Activated naive CD4-positive, alpha-beta T cell treated with anti-CD3 and anti-CD28 coated beads for 36 hours (primary cell): ENCODE measurements at regions of chr2 and their contacts with region 1.

Region 1: DNA sequence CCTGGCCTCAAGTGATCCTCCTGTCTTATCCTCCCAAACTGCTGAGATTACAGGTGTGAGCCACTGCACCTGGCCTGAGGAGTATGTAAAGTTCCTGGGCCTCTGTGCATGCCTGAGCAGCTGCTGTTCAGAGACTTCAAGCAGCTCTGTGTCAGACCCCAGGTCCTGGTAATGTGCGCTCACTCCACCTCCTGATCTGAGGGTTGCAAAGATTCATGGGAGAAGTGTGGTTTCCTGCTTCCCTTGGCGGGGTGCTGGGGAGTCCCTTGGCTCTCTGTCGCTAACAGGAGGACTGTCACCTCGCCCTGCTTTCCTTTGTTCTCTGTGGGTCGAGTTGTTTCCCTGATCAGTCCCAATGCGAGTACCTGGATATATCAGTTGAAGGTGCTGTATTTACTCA is 8.6 kb upstream of the IL36A start:
- DNase-seq: peak; percentile 93
- H3K4me3 Mint-ChIP-seq: no peak overlapping the region
- H3K27ac Mint-ChIP-seq: peak overlapping the region; percentile 80
- H3K4me1 Mint-ChIP-seq: peaks cover 34% of the 10 kb centered on the region
- H3K27me3 Mint-ChIP-seq: no peaks in the 10 kb centered on the region

Region 2: GRCh38 chr2:112764071-112765044 is 232.3 kb before region 1 on chr2 and contains the start of gene CKAP2L:
- CTCF ChIA-PET with region 1: no interaction called
- intact Hi-C with region 1: loop called (anchors 1 kb)
- DNase-seq: peak; percentile 99
- H3K4me3 Mint-ChIP-seq: peak within 1 kb of the TSS; percentile 98
- H3K27ac Mint-ChIP-seq: peak within 1 kb of the TSS; percentile 93
- H3K4me1 Mint-ChIP-seq: peaks cover 18% of the 10 kb centered on the region
- H3K27me3 Mint-ChIP-seq: no peaks in the 10 kb centered on the region
- total RNA-seq, gene CKAP2L: 49.2 to 50.8 TPM

Region 3: GRCh38 chr2:112980537-112980936 is 16.1 kb before region 1 on chr2:
- CTCF ChIA-PET with region 1: interaction called, 3 read pairs
- intact Hi-C with region 1: loop called (anchors 1 kb)
- DNase-seq: peak; percentile 48
- H3K4me3 Mint-ChIP-seq: no peak overlapping the region
- H3K27ac Mint-ChIP-seq: peak overlapping the region; percentile 67
- H3K4me1 Mint-ChIP-seq: peaks cover 43% of the 10 kb centered on the region
- H3K27me3 Mint-ChIP-seq: no peaks in the 10 kb centered on the region

Region 4: DNA sequence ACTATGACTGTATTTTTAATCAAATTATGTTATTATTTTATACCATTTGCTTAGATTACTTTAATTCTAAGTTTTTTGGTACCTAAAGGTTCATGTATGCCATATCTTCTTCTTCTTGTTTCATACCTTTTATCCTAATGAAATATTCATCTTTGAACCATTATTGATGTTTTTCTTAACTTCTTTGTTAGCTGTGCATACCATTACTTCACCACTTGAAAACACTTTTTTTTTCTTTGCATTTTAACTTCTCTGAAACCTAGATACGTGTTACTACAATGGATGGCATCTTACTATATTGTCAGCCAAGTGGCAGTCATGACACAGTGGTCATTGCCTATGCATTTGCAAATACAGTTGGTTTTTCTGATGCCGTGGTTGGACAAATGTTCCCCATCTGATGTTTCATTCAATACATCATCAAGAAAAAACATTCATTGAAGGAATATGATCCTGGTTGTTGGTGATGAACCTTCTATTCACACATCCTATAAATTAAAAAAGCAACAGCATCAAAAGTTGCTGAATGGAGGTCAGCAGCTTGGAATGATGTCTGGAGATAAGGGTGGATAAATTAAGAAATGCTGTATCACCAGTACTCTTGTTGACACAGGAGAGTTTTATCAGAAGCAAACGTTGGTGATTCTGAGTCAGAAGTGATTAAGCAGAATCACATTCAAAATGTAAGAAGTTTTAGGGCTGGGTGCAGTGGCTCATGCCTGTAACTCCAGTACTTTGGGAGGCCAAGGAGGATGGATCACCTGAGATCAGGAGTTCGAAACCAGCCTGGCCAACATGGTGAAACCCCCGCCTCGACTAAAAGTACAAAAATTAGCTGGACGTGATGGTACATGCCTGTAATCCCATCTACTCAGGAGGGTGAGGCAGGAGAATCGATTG is 16.1 kb after region 1 on chr2:
- CTCF ChIA-PET with region 1: no interaction called
- intact Hi-C with region 1: no loop called
- DNase-seq: no peak
- H3K4me3 Mint-ChIP-seq: no peak overlapping the region
- H3K27ac Mint-ChIP-seq: no peak overlapping the region
- H3K4me1 Mint-ChIP-seq: peaks cover 20% of the 10 kb centered on the region
- H3K27me3 Mint-ChIP-seq: no peaks in the 10 kb centered on the region

Region 5: DNA sequence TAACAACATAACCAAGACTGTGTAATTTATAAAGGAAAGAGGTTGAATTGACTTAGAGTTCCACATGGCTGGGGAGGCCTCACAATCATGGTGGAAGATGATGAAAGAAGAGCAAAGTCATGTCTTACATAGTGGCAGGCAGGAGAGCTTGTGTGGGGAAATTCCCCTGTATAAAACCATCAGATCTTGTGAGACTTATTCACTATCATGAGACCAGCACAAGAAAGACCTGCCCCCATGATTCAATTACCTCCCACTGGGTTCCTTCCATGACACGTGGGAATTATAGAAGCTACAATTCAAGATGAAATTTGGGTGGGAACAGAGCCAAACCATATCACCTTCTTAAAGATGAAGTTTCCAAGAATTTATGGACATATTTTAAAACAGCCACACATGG is 59.9 kb after region 1 on chr2:
- CTCF ChIA-PET with region 1: interaction called, 3 read pairs
- intact Hi-C with region 1: loop called (anchors 5 kb)
- DNase-seq: peak; percentile 10
- H3K4me3 Mint-ChIP-seq: no peak overlapping the region
- H3K27ac Mint-ChIP-seq: peak overlapping the region; percentile 77
- H3K4me1 Mint-ChIP-seq: peaks cover 13% of the 10 kb centered on the region
- H3K27me3 Mint-ChIP-seq: no peaks in the 10 kb centered on the region

Region 6: GRCh38 chr2:113072380-113072983 is 75.8 kb after region 1 on chr2:
- CTCF ChIA-PET with region 1: no interaction called
- intact Hi-C with region 1: no loop called
- DNase-seq: no peak
- H3K4me3 Mint-ChIP-seq: no peak overlapping the region
- H3K27ac Mint-ChIP-seq: no peak overlapping the region
- H3K4me1 Mint-ChIP-seq: peaks cover 7% of the 10 kb centered on the region
- H3K27me3 Mint-ChIP-seq: no peaks in the 10 kb centered on the region